K562 (cell line): ENCODE measurements at regions of chr2 and their contacts with region 1.

Region 1: GRCh38 chr2:172102391-172103278 is at the start of gene DLX2:
- DNase-seq: peak; percentile 96 to 97 (median 96)
- ATAC-seq: peak; percentile 80
- H3K4me3 ChIP-seq: peak within 1 kb of the TSS; percentile 63
- H3K27ac ChIP-seq: peak within 1 kb of the TSS; percentile 59
- H3K4me1 ChIP-seq: peaks cover 21 to 69% of the 10 kb centered on the region in 2 experiments
- H3K27me3 ChIP-seq: no peaks in the 10 kb centered on the region; a peak in 1 of 5 replicates
- CTCF ChIP-seq: peak in 2 of 3 experiments; percentile 23 to 32; a peak in 3 of 6 replicates
- EP300 ChIP-seq: no peak
- POLR2A ChIP-seq: peak; percentile 66
- RAD21 ChIP-seq: peak in 1 of 2 experiments; percentile 50; a peak in 2 of 4 replicates
- polyA plus RNA-seq, gene DLX2: 0.49 to 2.1 TPM

Region 2: DNA sequence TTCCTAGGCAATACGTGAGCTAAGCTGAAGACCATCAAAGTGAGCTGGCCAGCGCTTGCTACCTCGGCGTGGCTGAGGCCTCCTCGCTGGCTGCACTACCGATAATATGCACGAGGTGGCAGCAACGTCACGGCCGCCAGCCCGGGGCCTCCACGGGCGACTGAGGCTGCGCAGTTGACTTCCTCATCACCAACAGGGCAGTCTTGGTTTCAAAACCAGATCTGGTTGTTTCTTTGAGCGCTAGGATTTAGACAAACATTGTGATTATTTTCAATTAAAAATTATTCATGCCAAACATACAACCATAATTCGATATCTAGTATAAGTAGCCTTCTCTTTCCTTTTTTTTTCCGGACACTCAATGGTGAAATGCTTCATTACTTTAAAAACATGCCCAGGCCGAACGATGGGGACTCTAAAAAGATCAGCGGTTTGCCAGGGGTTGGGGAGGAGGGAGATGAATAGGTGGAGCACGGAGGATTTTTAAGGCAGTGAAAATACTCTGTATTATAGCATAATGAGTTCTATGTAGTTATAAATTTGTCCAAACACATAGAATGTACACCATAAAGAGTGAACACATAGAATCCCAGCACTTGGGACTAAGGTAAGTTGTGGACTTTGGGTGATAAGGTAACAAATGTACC is 528.4 kb before region 1 on chr2:
- CTCF ChIA-PET with region 1: interaction called, 19 read pairs
- POLR2A ChIA-PET with region 1: no interaction called
- in situ Hi-C with region 1: no loop called
- intact Hi-C with region 1: loop called (anchors 1 kb)
- DNase-seq: peak; percentile 90 to 99 (median 97)
- ATAC-seq: peak; percentile 99
- H3K4me3 ChIP-seq: no peak overlapping the region
- H3K27ac ChIP-seq: no peak overlapping the region
- H3K4me1 ChIP-seq: peaks cover 0 to 3% of the 10 kb centered on the region in 2 experiments; a peak in 1 of 5 replicates
- H3K27me3 ChIP-seq: no peaks in the 10 kb centered on the region
- CTCF ChIP-seq: peak; percentile 96 to 99 (median 97)
- EP300 ChIP-seq: 0 out of 2 replicates have a peak, but pooled peaks have one; percentile 3
- POLR2A ChIP-seq: no peak
- RAD21 ChIP-seq: peak; percentile 95 to 97

Region 3: DNA sequence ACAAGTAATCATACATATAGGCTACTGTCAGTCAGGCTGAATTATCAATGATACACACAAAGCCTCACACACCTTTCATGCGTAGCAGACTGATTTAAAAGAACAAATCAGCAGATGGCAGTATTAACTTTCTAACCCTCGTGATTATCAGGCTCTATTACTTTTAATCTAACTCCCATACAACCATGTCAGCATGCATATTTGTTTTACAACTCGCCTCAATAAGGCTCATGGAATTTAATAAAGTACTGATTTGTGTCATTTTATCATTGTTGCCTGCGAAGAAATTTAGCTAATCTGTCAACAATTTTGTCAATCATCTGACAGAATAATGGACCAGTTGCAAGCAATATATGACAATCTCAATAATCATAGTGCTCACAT is 291.4 kb before region 1 on chr2:
- CTCF ChIA-PET with region 1: interaction called, 74 read pairs
- POLR2A ChIA-PET with region 1: no interaction called
- in situ Hi-C with region 1: loop called (anchors 5 kb)
- intact Hi-C with region 1: loop called (anchors 1 kb)
- DNase-seq: peak in 1 of 4 experiments; percentile 37
- ATAC-seq: peak; percentile 77
- H3K4me3 ChIP-seq: no peak overlapping the region
- H3K27ac ChIP-seq: no peak overlapping the region
- H3K4me1 ChIP-seq: no peaks in the 10 kb centered on the region
- H3K27me3 ChIP-seq: no peaks in the 10 kb centered on the region
- CTCF ChIP-seq: peak; percentile 45 to 81 (median 56)
- EP300 ChIP-seq: no peak
- POLR2A ChIP-seq: no peak
- RAD21 ChIP-seq: peak; percentile 91 to 97

Region 4: DNA sequence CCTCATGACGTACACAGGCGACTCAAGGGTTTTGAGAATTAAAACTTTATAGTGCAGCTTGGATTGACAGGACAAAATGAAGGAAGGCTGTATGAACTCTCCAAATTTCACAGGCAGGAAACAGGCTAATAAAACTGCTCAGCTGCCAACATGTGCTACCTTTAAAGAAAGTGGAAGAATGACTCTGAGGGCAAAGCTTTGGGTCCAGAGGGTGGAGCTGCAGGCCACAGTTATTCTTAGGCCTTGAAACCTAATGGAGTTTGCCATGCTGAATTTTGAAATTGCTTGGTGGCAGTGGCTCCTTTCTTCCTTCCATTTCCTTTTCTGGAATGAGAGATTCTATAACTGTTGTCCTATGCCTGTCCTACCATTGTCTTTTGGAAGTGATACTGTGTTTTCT is 145.6 kb before region 1 on chr2:
- CTCF ChIA-PET with region 1: interaction called, 15 read pairs
- POLR2A ChIA-PET with region 1: interaction called, 3 read pairs
- in situ Hi-C with region 1: no loop called
- intact Hi-C with region 1: loop called (anchors 1 kb)
- DNase-seq: peak in 1 of 4 experiments; percentile 22
- ATAC-seq: peak; percentile 59
- H3K4me3 ChIP-seq: no peak overlapping the region
- H3K27ac ChIP-seq: peak overlapping the region; percentile 3; the same call in 1 of the 3 replicates
- H3K4me1 ChIP-seq: no peaks in the 10 kb centered on the region; a peak in 1 of 5 replicates
- H3K27me3 ChIP-seq: no peaks in the 10 kb centered on the region
- CTCF ChIP-seq: peak; percentile 18 to 50 (median 28); a peak in 3 of 6 replicates
- EP300 ChIP-seq: no peak
- POLR2A ChIP-seq: no peak
- RAD21 ChIP-seq: peak; percentile 60 to 74

Region 5: GRCh38 chr2:172031536-172031935 is 71.1 kb before region 1 on chr2:
- CTCF ChIA-PET with region 1: no interaction called
- POLR2A ChIA-PET with region 1: no interaction called
- in situ Hi-C with region 1: no loop called
- intact Hi-C with region 1: no loop called
- DNase-seq: no peak
- ATAC-seq: no peak
- H3K4me3 ChIP-seq: no peak overlapping the region
- H3K27ac ChIP-seq: no peak overlapping the region
- H3K4me1 ChIP-seq: peaks cover 4 to 8% of the 10 kb centered on the region in 2 experiments; a peak in 3 of 5 replicates
- H3K27me3 ChIP-seq: no peaks in the 10 kb centered on the region
- CTCF ChIP-seq: no peak
- EP300 ChIP-seq: no peak
- POLR2A ChIP-seq: no peak
- RAD21 ChIP-seq: no peak

Region 6: GRCh38 chr2:172084734-172085459 is 17.7 kb before region 1 on chr2:
- CTCF ChIA-PET with region 1: no interaction called
- POLR2A ChIA-PET with region 1: interaction called, 14 read pairs
- in situ Hi-C with region 1: no loop called
- intact Hi-C with region 1: loop called (anchors 1 kb)
- DNase-seq: peak; percentile 94 to 98 (median 96)
- ATAC-seq: peak; percentile 96
- H3K4me3 ChIP-seq: peak overlapping the region; percentile 65
- H3K27ac ChIP-seq: peak overlapping the region; percentile 81
- H3K4me1 ChIP-seq: peaks cover 7 to 43% of the 10 kb centered on the region in 2 experiments; a peak in 4 of 5 replicates
- H3K27me3 ChIP-seq: no peaks in the 10 kb centered on the region
- CTCF ChIP-seq: no peak
- EP300 ChIP-seq: peak; percentile 20; the same call in 1 of the 2 replicates
- POLR2A ChIP-seq: peak; percentile 91
- RAD21 ChIP-seq: peak; percentile 5 to 14; a peak in 2 of 4 replicates

Region 7: GRCh38 chr2:172147944-172148650 is 45.5 kb after region 1 on chr2:
- CTCF ChIA-PET with region 1: no interaction called
- POLR2A ChIA-PET with region 1: no interaction called
- in situ Hi-C with region 1: no loop called
- intact Hi-C with region 1: no loop called
- DNase-seq: no peak
- ATAC-seq: peak; percentile 31; the same call in 2 of the 3 replicates
- H3K4me3 ChIP-seq: no peak overlapping the region
- H3K27ac ChIP-seq: no peak overlapping the region
- H3K4me1 ChIP-seq: no peaks in the 10 kb centered on the region
- H3K27me3 ChIP-seq: peaks cover 23 to 31% of the 10 kb centered on the region in 2 experiments
- CTCF ChIP-seq: no peak
- EP300 ChIP-seq: no peak
- POLR2A ChIP-seq: no peak
- RAD21 ChIP-seq: no peak